ENCODE measurements at regions of chr14 and their contacts with region 1.

Region 1: DNA sequence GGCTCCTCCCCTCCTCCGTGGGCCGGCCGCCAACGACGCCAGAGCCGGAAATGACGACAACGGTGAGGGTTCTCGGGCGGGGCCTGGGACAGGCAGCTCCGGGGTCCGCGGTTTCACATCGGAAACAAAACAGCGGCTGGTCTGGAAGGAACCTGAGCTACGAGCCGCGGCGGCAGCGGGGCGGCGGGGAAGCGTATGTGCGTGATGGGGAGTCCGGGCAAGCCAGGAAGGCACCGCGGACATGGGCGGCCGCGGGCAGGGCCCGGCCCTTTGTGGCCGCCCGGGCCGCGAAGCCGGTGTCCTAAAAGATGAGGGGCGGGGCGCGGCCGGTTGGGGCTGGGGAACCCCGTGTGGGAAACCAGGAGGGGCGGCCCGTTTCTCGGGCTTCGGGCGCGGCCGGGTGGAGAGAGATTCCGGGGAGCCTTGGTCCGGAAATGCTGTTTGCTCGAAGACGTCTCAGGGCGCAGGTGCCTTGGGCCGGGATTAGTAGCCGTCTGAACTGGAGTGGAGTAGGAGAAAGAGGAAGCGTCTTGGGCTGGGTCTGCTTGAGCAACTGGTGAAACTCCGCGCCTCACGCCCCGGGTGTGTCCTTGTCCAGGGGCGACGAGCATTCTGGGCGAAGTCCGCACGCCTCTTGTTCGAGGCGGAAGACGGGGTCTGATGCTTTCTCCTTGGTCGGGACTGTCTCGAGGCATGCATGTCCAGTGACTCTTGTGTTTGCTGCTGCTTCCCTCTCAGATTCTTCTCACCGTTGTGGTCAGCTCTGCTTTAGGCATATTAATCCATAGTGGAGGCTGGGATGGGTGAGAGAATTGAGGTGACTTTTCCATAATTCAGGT is at the start of gene PSEN1:
- DNase-seq: peak; percentile 96 to 98
- H3K4me3 ChIP-seq: peak within 1 kb of the TSS; percentile 82
- H3K4me3 Mint-ChIP-seq: peak within 1 kb of the TSS; percentile 74
- H3K27ac Mint-ChIP-seq: peak within 1 kb of the TSS; percentile 78
- H3K4me1 ChIP-seq: no peaks in the 10 kb centered on the region
- H3K4me1 Mint-ChIP-seq: peaks cover 8% of the 10 kb centered on the region
- H3K27me3 ChIP-seq: no peaks in the 10 kb centered on the region
- H3K27me3 Mint-ChIP-seq: no peaks in the 10 kb centered on the region
- CTCF ChIP-seq: no peak
- total RNA-seq, gene PSEN1: 74.8 and 76.8 TPM in 2 replicates

Region 2: DNA sequence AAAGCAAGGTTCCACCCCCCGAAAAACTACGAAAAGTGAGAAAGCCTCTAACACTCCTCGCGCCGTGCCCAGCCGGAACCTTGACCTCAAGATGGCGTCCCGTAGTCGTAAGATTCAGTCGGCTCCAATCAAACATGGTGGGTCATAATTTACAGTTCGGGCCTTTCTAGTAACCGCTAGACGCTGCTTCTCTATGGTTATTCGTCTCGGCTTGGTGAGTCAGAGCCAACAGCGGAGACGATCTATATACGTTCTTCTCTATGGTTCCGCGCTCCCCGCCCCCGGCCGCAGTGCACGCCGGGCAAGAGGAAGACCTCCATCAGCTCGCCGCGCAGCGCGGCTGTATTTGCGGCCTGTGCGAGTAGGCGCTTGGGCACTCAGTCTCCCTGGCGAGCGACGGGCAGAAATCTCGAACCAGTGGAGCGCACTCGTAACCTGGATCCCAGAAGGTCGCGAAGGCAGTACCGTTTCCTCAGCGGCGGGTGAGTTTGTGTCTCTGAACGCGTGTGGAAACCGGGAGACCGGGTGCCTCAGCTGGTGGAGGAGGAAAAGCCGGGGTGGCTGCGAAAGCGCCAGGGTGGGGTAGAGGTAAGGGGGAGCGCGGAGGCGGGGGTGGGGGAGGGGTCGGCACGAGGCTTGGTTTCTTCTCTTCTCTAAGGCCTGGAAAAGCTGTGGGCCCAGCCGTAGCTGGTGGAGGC is 78.2 kb before region 1 on chr14 and contains the start of gene RBM25:
- CTCF ChIA-PET with region 1: no interaction called
- POLR2A ChIA-PET with region 1: interaction called, 24 read pairs
- intact Hi-C with region 1: no loop called
- DNase-seq: peak; percentile 97 to 98
- H3K4me3 ChIP-seq: peak within 1 kb of the TSS; percentile 67
- H3K4me3 Mint-ChIP-seq: no peak within 1 kb of the TSS
- H3K27ac Mint-ChIP-seq: no peak within 1 kb of the TSS
- H3K4me1 ChIP-seq: peaks cover 12% of the 10 kb centered on the region; the same call in 1 of the 2 replicates
- H3K4me1 Mint-ChIP-seq: no peaks in the 10 kb centered on the region
- H3K27me3 ChIP-seq: no peaks in the 10 kb centered on the region
- H3K27me3 Mint-ChIP-seq: no peaks in the 10 kb centered on the region
- CTCF ChIP-seq: no peak
- total RNA-seq, gene RBM25: 89.3 and 98.8 TPM in 2 replicates

Region 3: DNA sequence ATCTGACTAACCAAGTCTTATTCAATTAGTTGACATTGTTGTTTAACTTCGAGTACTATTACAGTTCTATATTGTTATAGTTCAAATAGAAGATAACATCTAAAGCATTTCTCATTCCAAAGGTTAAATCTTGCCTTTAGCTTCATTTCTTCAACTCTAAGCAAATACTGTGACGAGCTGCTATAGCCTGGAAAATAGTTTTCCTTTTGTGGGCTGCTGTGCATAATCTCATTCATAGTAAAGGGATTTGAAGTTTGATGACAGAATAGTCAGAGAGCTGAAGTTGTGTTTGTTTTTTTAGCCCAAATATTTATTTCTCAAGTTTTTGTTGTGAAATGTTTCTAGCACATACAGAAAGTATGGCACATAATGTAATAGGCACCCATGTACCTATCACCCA is 13.1 kb after region 1 on chr14:
- CTCF ChIA-PET with region 1: interaction called, 3 read pairs
- POLR2A ChIA-PET with region 1: interaction called, 14 read pairs
- intact Hi-C with region 1: no loop called
- DNase-seq: peak in 1 of 2 experiments; percentile 30
- H3K4me3 ChIP-seq: no peak overlapping the region
- H3K4me3 Mint-ChIP-seq: no peak overlapping the region
- H3K27ac Mint-ChIP-seq: peak overlapping the region; percentile 55
- H3K4me1 ChIP-seq: peaks cover 23% of the 10 kb centered on the region
- H3K4me1 Mint-ChIP-seq: no peaks in the 10 kb centered on the region
- H3K27me3 ChIP-seq: no peaks in the 10 kb centered on the region
- H3K27me3 Mint-ChIP-seq: no peaks in the 10 kb centered on the region
- CTCF ChIP-seq: no peak

Region 4: DNA sequence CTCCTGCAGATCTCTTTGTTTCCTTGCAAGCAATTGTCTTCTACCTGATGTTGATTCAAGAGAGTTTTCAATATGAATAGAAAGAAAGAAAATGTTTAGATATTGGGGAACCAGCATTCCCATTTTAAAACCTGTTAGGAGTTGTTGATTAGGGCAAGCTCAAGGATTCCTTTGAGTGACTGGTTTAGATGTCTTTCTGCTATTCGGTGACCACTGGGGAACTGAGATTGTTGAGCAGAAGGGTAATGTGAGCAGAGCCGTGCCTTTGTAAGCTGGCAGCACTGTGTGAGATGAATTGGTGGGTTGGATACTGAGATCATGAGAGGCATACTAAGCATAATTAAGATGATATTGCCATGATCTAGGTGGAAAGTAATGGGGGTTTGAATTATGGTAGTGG is 61.6 kb after region 1 on chr14:
- CTCF ChIA-PET with region 1: no interaction called
- POLR2A ChIA-PET with region 1: no interaction called
- intact Hi-C with region 1: no loop called
- DNase-seq: no peak
- H3K4me3 ChIP-seq: no peak overlapping the region
- H3K4me3 Mint-ChIP-seq: no peak overlapping the region
- H3K27ac Mint-ChIP-seq: no peak overlapping the region
- H3K4me1 ChIP-seq: no peaks in the 10 kb centered on the region
- H3K4me1 Mint-ChIP-seq: no peaks in the 10 kb centered on the region
- H3K27me3 ChIP-seq: no peaks in the 10 kb centered on the region
- H3K27me3 Mint-ChIP-seq: no peaks in the 10 kb centered on the region
- CTCF ChIP-seq: no peak

Measured in Caco-2 (cell line).